Endothelial cell of umbilical vein (primary cell): ENCODE measurements at regions of chr3 and their contacts with region 1.

Region 1: GRCh38 chr3:148075763-148076716 is 621.7 kb upstream of the AGTR1 start:
- DNase-seq: peak; percentile 71
- H3K4me3 ChIP-seq: no peak overlapping the region
- H3K27ac ChIP-seq: no peak overlapping the region
- H3K4me1 ChIP-seq: no peaks in the 10 kb centered on the region
- H3K27me3 ChIP-seq: no peaks in the 10 kb centered on the region
- CTCF ChIP-seq: peak; percentile 67 to 78
- POLR2A ChIP-seq: no peak

Region 2: DNA sequence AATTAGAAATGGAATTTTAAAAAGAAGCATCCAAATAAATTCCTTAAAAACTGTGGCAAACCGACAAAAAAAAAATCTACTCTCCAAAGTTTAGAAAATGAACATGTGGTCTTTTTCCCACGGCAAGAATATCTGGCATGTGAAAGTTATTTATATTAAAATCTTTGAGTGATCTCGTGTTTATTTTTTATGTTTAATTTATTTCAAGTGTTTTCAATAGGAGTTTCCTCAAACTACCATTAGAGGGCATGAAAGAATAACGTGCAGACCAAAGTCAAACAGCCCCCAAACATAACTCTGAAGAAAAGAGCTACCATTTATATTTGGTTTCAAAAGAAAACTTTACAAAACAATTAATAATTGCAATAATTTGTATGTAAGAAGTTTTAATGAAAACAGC is 956.1 kb before region 1 on chr3:
- CTCF ChIA-PET with region 1: interaction called, 43 read pairs
- POLR2A ChIA-PET with region 1: no interaction called
- dilution Hi-C with region 1: no loop called
- intact Hi-C with region 1: loop called (anchors 2 kb)
- DNase-seq: peak; percentile 29
- H3K4me3 ChIP-seq: no peak overlapping the region
- H3K27ac ChIP-seq: no peak overlapping the region
- H3K4me1 ChIP-seq: no peaks in the 10 kb centered on the region
- H3K27me3 ChIP-seq: peaks cover 0 to 4% of the 10 kb centered on the region in 2 experiments
- CTCF ChIP-seq: peak in 1 of 2 donors; percentile 33
- POLR2A ChIP-seq: no peak

Region 3: GRCh38 chr3:147410526-147411237 is 665.4 kb before region 1 on chr3:
- CTCF ChIA-PET with region 1: interaction called, 14 read pairs
- POLR2A ChIA-PET with region 1: no interaction called
- dilution Hi-C with region 1: no loop called
- intact Hi-C with region 1: loop called (anchors 2 kb)
- DNase-seq: no peak
- H3K4me3 ChIP-seq: peak overlapping the region in 1 of 3 experiments; percentile 18
- H3K27ac ChIP-seq: no peak overlapping the region
- H3K4me1 ChIP-seq: peaks cover 6% of the 10 kb centered on the region
- H3K27me3 ChIP-seq: peaks cover 93 to 98% of the 10 kb centered on the region in 2 experiments
- CTCF ChIP-seq: no peak
- POLR2A ChIP-seq: no peak

Region 4: GRCh38 chr3:147616998-147617619 is 458.9 kb before region 1 on chr3:
- CTCF ChIA-PET with region 1: interaction called, 74 read pairs
- POLR2A ChIA-PET with region 1: no interaction called
- dilution Hi-C with region 1: no loop called
- intact Hi-C with region 1: loop called (anchors 1 kb)
- DNase-seq: peak; percentile 13
- H3K4me3 ChIP-seq: no peak overlapping the region
- H3K27ac ChIP-seq: no peak overlapping the region
- H3K4me1 ChIP-seq: no peaks in the 10 kb centered on the region
- H3K27me3 ChIP-seq: peaks cover 0 to 1% of the 10 kb centered on the region in 2 experiments
- CTCF ChIP-seq: peak; percentile 7 to 28
- POLR2A ChIP-seq: no peak

Region 5: DNA sequence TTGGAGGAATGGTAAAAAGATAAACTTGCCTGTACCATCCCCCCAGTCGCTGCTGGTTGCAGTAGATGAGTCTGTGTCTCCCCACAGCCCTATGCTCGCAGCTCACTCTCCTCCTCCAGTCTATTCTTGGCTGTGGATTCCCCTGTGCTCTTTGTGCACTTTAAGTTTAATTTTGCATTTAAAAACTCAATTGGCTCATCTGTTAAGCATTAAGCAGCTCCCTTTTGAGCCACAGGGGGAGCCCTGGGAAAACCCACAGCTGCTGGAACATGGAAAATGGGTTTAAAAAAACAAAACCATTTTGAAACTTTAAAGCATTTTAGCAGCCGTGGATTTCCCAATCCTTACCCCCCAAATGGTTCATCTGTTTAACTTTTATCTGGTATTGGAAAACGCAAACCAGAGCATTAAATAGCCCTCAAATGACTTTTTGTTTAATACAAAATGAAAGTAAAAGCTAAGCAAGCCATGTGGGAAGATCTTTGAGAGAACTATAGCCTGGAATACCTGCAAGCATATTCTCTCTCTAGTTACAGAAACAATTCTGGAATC is 130.0 kb before region 1 on chr3:
- CTCF ChIA-PET with region 1: interaction called, 39 read pairs
- POLR2A ChIA-PET with region 1: no interaction called
- dilution Hi-C with region 1: no loop called
- intact Hi-C with region 1: loop called (anchors 5 kb)
- DNase-seq: peak; percentile 68
- H3K4me3 ChIP-seq: no peak overlapping the region
- H3K27ac ChIP-seq: no peak overlapping the region
- H3K4me1 ChIP-seq: peaks cover 13% of the 10 kb centered on the region
- H3K27me3 ChIP-seq: no peaks in the 10 kb centered on the region
- CTCF ChIP-seq: peak; percentile 40 to 64
- POLR2A ChIP-seq: no peak

Region 6: GRCh38 chr3:148092624-148093347 is 16.7 kb after region 1 on chr3:
- CTCF ChIA-PET with region 1: interaction called, 40 read pairs
- POLR2A ChIA-PET with region 1: no interaction called
- dilution Hi-C with region 1: no loop called
- intact Hi-C with region 1: no loop called
- DNase-seq: no peak
- H3K4me3 ChIP-seq: no peak overlapping the region
- H3K27ac ChIP-seq: no peak overlapping the region
- H3K4me1 ChIP-seq: no peaks in the 10 kb centered on the region
- H3K27me3 ChIP-seq: no peaks in the 10 kb centered on the region
- CTCF ChIP-seq: no peak
- POLR2A ChIP-seq: no peak

Region 7: DNA sequence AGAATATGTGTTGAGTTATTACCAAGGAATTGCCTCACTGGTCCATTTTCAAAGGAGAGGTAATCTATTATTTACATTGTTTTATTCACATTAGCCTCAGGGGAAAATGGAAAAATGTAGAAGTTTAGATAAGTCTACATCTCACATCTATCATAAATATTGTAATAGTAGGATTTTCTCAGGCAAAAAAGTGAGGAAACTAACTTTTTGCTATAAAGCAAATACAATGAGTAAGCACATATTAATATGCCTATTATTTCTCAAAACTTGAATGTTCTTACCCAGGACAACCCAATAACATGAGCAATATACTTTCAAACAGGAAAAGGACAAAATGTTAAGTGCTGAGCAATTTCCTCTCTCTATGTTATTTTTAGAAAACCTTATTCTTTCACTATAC is 437.1 kb after region 1 on chr3:
- CTCF ChIA-PET with region 1: no interaction called
- POLR2A ChIA-PET with region 1: no interaction called
- dilution Hi-C with region 1: no loop called
- intact Hi-C with region 1: no loop called
- DNase-seq: peak; percentile 75
- H3K4me3 ChIP-seq: no peak overlapping the region
- H3K27ac ChIP-seq: peak overlapping the region; percentile 79
- H3K4me1 ChIP-seq: peaks cover 14% of the 10 kb centered on the region
- H3K27me3 ChIP-seq: no peaks in the 10 kb centered on the region
- CTCF ChIP-seq: no peak
- POLR2A ChIP-seq: no peak